Heart right ventricle (tissue), 16 donors: ENCODE measurements at regions of chr1 and their contacts with region 1.

Region 1: DNA sequence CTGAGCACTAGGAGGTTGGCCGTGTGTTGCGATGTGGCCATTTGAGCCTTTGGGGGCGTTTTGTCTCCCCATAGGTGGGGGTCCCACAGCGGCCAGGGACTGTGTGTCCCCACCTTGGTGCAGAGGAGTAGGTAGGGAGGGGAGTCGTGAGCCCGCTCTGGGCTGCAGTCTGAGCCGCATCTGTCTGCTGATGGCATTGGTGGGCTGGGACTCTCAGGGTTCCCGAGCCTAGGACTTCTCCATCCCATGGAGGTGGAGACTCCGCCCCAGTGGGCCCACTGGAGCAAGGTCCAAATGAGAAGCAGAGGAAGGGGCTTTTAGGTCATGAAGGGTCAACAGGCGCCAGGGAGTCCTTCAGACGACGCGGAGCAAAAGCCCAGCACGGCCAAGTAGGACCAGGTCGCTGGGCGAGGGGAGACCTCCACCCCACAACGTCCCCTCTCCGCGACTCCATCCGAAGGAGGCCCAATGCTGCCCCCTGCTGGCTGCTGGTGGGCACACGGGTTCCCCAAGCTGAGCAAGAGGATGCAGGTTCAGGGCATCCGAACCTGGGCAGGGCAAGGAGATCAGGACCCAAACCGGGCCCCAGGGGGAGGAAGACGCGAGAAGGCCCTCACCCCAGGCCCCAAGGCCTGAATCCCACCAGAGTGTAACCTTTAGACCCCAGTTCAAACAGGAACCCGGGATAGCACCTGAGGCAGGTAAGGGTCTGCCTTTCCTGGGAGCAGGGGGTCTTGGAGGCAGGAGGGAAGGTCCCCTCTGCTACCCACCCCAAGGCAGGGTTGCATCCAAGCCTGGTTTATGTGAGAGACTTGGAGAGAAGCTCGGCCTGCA is 14.9 kb downstream of the TTC34 start:
- DNase-seq: peak; percentile 22 to 67
- ATAC-seq: peak in 6 of 8 donors; percentile 11 to 65 (median 52)
- H3K4me3 ChIP-seq: no peak overlapping the region
- H3K27ac ChIP-seq: no peak overlapping the region
- H3K4me1 ChIP-seq: peaks cover 0 to 6% (median 0%) of the 10 kb centered on the region in 9 donors
- H3K27me3 ChIP-seq: peaks cover 0 to 62% (median 59%) of the 10 kb centered on the region in 7 donors
- CTCF ChIP-seq: peak; percentile 60 to 83 (median 75)

Region 2: GRCh38 chr1:2412519-2413233 is 373.9 kb before region 1 on chr1 and contains the start of gene PEX10:
- intact Hi-C with region 1: loop called (anchors 1 to 10 kb)
- DNase-seq: peak; percentile 96 to 99
- ATAC-seq: peak; percentile 94 to 96 (median 94)
- H3K4me3 ChIP-seq: peak within 1 kb of the TSS; percentile 74 to 99 (median 86)
- H3K27ac ChIP-seq: peak within 1 kb of the TSS; percentile 76 to 93 (median 90)
- H3K4me1 ChIP-seq: peaks cover 3 to 37% (median 25%) of the 10 kb centered on the region in 9 donors
- H3K27me3 ChIP-seq: peaks cover 0 to 27% (median 20%) of the 10 kb centered on the region in 7 donors
- CTCF ChIP-seq: no peak
- total RNA-seq, gene PEX10: 14.6 to 26.0 (median 18.6) TPM